Esophagus muscularis mucosa (tissue), 4 donors: ENCODE measurements at regions of chr16 and their contacts with region 1.

Region 1: GRCh38 chr16:89217388-89218191 is at the start of gene ZNF778:
- DNase-seq: peak; percentile 95
- H3K4me3 ChIP-seq: peak within 1 kb of the TSS; percentile 76 to 98 (median 92)
- H3K27ac ChIP-seq: peak within 1 kb of the TSS; percentile 93 to 97 (median 95)
- H3K4me1 ChIP-seq: peaks cover 20 to 45% (median 36%) of the 10 kb centered on the region in 4 donors
- H3K27me3 ChIP-seq: no peaks in the 10 kb centered on the region
- CTCF ChIP-seq: peak in 2 of 3 experiments; percentile 6 to 12
- EP300 ChIP-seq: no peak
- POLR2A ChIP-seq: peak; percentile 58
- total RNA-seq, gene ZNF778: 11.2 to 17.2 (median 13.9) TPM

Region 2: GRCh38 chr16:88941913-88942909 is 275.4 kb before region 1 on chr16:
- intact Hi-C with region 1: loop called (anchors 2 kb)
- DNase-seq: no peak
- H3K4me3 ChIP-seq: peak overlapping the region; percentile 55 to 61 (median 58)
- H3K27ac ChIP-seq: no peak overlapping the region
- H3K4me1 ChIP-seq: peaks cover 21 to 49% (median 48%) of the 10 kb centered on the region in 4 donors
- H3K27me3 ChIP-seq: peaks cover 0 to 88% (median 17%) of the 10 kb centered on the region in 4 donors
- CTCF ChIP-seq: peak; percentile 65 to 81 (median 65)
- EP300 ChIP-seq: no peak
- POLR2A ChIP-seq: no peak

Region 3: DNA sequence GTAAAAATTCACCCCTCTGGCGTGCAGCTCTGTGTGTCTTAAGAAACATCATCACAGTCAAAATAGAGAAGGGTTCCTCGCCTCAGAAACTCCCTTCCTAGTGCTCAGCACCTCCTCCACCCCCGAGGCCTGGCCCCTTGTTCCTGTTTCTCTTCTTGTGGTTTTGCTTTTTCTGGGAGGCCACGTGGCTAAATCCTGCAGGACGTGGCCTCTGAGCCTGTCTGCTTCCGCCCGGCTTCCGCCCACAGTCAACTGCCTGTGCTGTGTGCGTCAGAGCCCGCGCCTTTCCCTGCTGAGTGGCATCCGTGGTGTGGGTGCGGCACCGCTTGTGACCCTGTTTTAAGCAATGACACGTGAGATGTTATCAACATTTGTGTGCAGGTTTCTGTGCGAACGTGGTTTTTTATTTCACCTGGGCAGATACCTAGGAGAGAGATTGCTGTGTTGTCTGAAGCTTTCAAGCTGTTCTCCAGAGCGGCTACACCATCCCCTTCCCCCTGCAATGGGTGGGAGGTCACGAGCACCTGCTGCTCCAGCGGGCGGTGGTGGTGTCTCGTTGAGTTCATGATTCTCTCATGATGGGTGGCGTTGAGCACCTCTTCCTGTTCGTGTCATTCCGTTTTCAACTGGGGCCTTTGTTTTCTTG is 102.3 kb before region 1 on chr16:
- intact Hi-C with region 1: no loop called
- DNase-seq: peak; percentile 93
- H3K4me3 ChIP-seq: peak overlapping the region in 1 of 4 donors; percentile 26
- H3K27ac ChIP-seq: no peak overlapping the region
- H3K4me1 ChIP-seq: peaks cover 0 to 5% (median 0%) of the 10 kb centered on the region in 4 donors
- H3K27me3 ChIP-seq: no peaks in the 10 kb centered on the region
- CTCF ChIP-seq: no peak
- EP300 ChIP-seq: no peak
- POLR2A ChIP-seq: no peak

Region 4: DNA sequence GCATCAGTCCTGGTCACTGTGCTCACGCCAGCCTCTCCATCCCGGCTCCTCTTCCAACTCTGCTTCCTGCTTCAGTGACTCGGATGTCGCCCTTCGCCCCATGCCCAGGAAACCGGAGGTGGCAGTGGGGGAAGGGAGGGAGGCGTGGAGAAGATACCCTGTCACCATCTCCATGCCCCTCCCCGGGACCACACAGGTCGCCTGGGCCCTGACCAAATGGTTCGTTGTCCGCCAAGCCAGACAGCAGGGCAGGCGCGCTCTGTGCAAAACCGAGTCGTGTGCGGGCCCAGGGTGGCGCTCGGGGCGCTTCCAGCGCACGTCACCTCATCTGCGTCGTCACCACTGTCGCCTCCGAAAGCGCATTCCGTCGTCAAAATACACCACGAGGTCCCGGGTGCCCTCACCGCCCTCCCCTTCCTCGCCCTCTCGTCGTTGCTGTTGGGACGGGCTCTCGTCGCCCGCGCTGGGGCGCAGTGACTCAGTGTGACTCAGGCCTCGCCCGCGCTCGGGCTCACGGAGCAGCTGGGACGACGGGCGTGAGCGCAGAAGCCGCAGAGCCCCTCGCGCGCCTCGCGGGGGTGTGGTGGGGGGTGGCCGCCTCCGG is 39.2 kb after region 1 on chr16:
- intact Hi-C with region 1: no loop called
- DNase-seq: no peak
- H3K4me3 ChIP-seq: peak overlapping the region; percentile 39 to 61 (median 48)
- H3K27ac ChIP-seq: no peak overlapping the region
- H3K4me1 ChIP-seq: peaks cover 9 to 16% (median 15%) of the 10 kb centered on the region in 4 donors
- H3K27me3 ChIP-seq: peaks cover 0 to 37% (median 12%) of the 10 kb centered on the region in 4 donors
- CTCF ChIP-seq: no peak
- EP300 ChIP-seq: no peak
- POLR2A ChIP-seq: no peak